Caco-2 (cell line): ENCODE measurements at regions of chr11 and their contacts with region 1.

Region 1: DNA sequence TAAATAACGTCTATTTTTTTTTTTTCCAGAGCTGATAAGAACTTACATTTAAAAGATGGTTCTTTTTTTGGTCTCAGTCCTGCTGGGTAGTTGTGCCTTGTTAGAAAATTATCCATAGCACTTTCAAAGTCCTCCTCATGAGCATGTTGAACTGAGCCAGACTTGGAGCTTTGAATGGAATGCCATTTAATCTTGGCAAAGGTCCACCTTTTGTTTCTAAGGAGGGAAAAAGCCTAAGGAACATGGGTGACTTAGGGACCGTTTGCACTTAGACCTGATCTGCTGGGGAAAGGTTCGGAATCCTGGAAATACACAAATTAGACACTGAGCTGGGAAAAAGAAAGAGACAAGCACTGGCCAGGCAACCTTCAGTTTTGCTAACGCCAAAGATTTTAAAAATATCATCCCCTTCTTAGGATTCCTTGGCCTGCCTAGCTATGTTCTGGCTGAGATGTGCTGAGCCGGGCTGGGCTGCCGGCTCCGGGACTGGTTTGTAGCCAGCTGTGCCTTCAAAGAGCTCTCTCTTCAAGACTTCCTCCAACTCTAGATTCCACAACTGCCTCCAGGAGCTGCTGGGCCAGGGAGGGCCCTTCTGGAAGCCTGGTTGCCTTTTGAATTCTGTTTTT is 67.4 kb downstream of the ENDOD1 start:
- DNase-seq: no peak
- H3K4me3 ChIP-seq: no peak overlapping the region
- H3K4me3 Mint-ChIP-seq: no peak overlapping the region
- H3K27ac Mint-ChIP-seq: no peak overlapping the region
- H3K4me1 ChIP-seq: peaks cover 6% of the 10 kb centered on the region
- H3K4me1 Mint-ChIP-seq: peaks cover 18% of the 10 kb centered on the region
- H3K27me3 ChIP-seq: no peaks in the 10 kb centered on the region
- H3K27me3 Mint-ChIP-seq: no peaks in the 10 kb centered on the region
- CTCF ChIP-seq: no peak

Region 2: DNA sequence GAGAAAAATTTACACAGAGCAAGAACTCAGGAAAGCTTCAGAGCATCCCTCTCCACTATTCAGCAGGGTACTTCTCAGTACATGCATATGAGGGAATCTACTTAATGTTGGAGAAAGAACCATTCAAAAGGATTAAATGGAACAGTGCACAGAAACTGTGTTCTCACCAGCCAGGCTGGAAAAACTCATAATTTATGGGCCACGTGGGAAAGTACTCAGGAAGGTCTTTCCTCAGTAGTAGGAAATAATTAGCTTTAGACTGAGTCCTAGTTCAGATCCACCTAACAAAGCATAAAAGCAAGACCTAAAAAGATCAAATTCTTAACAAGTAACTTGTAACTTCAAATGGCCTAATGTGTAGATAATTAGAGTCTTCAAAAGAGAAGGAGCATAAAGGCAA is 498.5 kb after region 1 on chr11:
- CTCF ChIA-PET with region 1: interaction called, 10 read pairs
- POLR2A ChIA-PET with region 1: no interaction called
- intact Hi-C with region 1: no loop called
- DNase-seq: no peak
- H3K4me3 ChIP-seq: no peak overlapping the region
- H3K4me3 Mint-ChIP-seq: no peak overlapping the region
- H3K27ac Mint-ChIP-seq: no peak overlapping the region
- H3K4me1 ChIP-seq: no peaks in the 10 kb centered on the region
- H3K4me1 Mint-ChIP-seq: no peaks in the 10 kb centered on the region
- H3K27me3 ChIP-seq: no peaks in the 10 kb centered on the region
- H3K27me3 Mint-ChIP-seq: peaks cover 27% of the 10 kb centered on the region
- CTCF ChIP-seq: no peak